A549 (cell line): ENCODE measurements at regions of chr4 and their contacts with region 1.

Region 1: DNA sequence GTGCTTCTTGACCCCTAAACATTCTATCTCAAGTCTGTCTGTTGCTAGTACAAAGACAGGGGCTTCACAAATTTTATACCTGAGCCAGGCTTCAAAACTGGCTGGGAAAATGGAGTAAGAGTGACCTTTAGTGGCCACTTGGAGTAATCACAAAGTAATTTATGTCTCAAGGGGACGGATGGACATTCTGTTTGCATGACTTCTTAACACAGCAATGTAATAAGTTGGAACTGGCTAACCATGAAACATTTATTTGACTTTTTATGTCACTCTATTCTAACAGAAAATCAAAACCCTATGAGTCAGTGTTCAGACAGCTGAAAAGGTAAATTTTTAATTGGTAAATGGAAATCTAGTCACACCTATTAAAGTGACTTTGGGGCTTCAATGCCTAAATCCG is 600.6 kb downstream of the ANKRD50 start:
- DNase-seq: peak; percentile 3 to 53
- ATAC-seq: peak; percentile 56 to 79; a peak in 4 of 6 replicates
- H3K4me3 ChIP-seq: no peak overlapping the region
- H3K27ac ChIP-seq: no peak overlapping the region
- H3K4me1 ChIP-seq: no peaks in the 10 kb centered on the region
- CTCF ChIP-seq: peak; percentile 59
- EP300 ChIP-seq: no peak
- POLR2A ChIP-seq: no peak
- RAD21 ChIP-seq: peak; percentile 73 to 77

Region 2: DNA sequence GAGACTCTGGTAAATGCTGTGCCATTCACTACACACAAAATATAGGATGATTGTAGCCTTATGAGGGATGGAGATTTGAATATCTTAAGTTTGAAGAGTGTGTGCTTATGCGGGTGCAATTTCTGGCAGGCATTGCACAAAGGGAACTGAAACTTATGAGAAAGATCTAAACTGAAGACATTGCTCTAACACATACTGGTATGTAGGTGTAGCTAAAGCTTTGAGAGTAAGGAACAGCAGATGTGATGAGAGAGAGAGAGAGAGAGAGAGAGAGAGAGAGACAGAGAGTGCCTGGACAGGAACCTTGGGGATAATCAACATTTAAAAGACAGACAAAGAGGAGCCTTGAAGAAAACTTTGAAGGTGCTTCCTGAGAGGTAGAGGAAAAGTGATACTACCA is 335.7 kb before region 1 on chr4:
- CTCF ChIA-PET with region 1: interaction called, 18 read pairs
- POLR2A ChIA-PET with region 1: no interaction called
- DNase-seq: no peak
- ATAC-seq: no peak
- H3K4me3 ChIP-seq: no peak overlapping the region
- H3K27ac ChIP-seq: no peak overlapping the region
- H3K4me1 ChIP-seq: no peaks in the 10 kb centered on the region
- CTCF ChIP-seq: no peak
- EP300 ChIP-seq: no peak
- POLR2A ChIP-seq: no peak
- RAD21 ChIP-seq: no peak

Region 3: GRCh38 chr4:123976285-123976684 is 135.6 kb before region 1 on chr4:
- CTCF ChIA-PET with region 1: no interaction called
- POLR2A ChIA-PET with region 1: no interaction called
- DNase-seq: no peak
- ATAC-seq: no peak
- H3K4me3 ChIP-seq: no peak overlapping the region
- H3K27ac ChIP-seq: no peak overlapping the region
- H3K4me1 ChIP-seq: no peaks in the 10 kb centered on the region
- CTCF ChIP-seq: no peak
- EP300 ChIP-seq: no peak
- POLR2A ChIP-seq: no peak
- RAD21 ChIP-seq: no peak